ENCODE measurements at regions of chr5 and their contacts with region 1.

Region 1: DNA sequence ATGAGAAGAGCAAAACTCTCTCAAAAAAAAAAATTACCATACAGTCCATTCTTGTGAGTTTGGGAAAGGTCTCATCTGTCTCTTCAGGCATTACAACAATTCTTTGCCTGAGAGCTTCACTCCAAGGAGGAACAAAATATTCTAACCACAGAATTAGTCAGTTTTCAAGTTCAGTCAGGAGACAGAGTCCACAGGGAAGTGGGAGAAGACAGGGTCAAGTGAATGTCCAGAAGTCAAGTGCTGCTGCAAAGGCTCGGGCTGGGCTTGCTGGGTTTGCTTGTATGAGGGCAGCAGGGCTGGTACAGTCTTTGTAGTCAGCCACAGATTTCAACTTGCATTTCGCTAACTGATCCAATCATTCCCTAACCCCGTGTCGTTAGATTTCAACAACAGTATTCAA is 17.6 kb upstream of the HEXB start:
- DNase-seq: no peak
- H3K4me3 ChIP-seq: no peak overlapping the region
- H3K27me3 ChIP-seq: peaks cover 3% of the 10 kb centered on the region
- CTCF ChIP-seq: no peak

Region 2: GRCh38 chr5:75526070-75526469 is 858.7 kb after region 1 on chr5:
- CTCF ChIA-PET with region 1: no interaction called
- POLR2A ChIA-PET with region 1: interaction called, 13 read pairs
- DNase-seq: no peak
- H3K4me3 ChIP-seq: no peak overlapping the region
- H3K27me3 ChIP-seq: no peaks in the 10 kb centered on the region
- CTCF ChIP-seq: no peak